ENCODE measurements at regions of chr6 and their contacts with region 1.

Region 1: GRCh38 chr6:117976030-117976651 is 69.1 kb downstream of the SLC35F1 start:
- DNase-seq: no peak
- H3K4me3 ChIP-seq: no peak overlapping the region
- H3K27ac ChIP-seq: no peak overlapping the region
- H3K4me1 ChIP-seq: no peaks in the 10 kb centered on the region
- H3K27me3 ChIP-seq: no peaks in the 10 kb centered on the region
- CTCF ChIP-seq: peak in 2 of 3 donors; percentile 38 to 45
- POLR2A ChIP-seq: no peak

Region 2: DNA sequence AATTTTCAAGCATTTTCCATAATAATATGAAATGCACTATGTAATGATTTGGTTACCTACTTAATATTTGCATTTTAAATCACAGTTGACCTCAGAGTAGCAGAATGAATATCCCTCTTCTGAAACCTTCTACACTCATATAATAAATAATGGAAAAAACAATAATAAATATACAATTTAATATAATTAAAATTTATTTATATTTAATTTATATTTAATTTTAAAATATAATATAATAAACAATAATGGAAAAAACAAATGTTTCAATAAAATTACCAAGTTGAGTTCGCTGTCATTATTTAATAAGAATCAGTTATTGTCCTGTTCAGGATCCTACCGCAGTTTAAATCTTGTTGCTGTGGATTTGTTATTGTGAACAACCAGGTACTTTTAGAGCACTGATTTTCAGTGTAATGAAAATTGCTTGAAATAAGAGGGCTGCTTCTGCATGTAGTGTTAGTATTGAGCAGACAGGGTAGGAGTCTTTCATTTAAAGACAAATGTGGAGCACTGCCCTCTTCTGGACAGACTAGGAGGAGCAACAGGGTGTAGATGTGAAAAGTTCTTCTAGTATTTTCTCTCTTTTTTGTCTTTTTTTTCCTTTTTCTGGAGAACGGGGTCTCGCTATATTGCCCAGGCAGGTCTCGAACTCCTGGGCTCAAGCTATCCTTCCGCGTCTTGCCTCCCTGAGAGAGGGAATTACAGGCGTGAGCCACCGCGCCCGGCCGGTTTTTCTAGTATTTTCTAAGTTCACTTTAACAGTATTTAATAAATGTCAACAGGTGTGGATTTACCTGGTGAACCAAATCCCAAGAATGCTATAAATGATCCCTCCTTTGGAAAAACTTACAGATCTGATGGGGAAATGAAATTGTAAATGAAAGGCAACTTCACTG is 1444.2 kb before region 1 on chr6:
- intact Hi-C with region 1: loop called (anchors 10 kb)
- DNase-seq: no peak
- H3K4me3 ChIP-seq: no peak overlapping the region
- H3K27ac ChIP-seq: no peak overlapping the region
- H3K4me1 ChIP-seq: no peaks in the 10 kb centered on the region
- H3K27me3 ChIP-seq: no peaks in the 10 kb centered on the region
- CTCF ChIP-seq: peak; percentile 47 to 67 (median 67)
- POLR2A ChIP-seq: no peak

Region 3: DNA sequence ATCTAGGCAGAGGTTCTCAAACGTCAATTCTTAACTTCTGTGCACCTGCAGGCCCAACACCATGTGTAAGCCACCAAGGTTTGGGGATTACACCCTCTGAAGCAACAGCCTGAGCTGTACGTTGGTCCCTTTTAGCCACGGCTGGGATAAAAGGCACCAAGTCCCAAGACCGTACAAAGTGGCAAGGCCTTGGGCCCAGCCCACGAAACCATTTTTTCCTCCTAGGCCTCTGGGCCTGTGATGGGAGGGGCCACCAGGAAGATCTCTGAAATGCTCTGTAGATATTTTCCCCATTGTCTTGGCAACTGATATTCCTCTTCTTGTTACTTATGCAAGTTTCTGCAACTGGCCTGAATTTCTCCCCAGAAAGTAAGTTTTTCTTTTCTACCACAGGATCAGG is 1106.9 kb after region 1 on chr6:
- intact Hi-C with region 1: loop called (anchors 5 kb)
- DNase-seq: no peak
- H3K4me3 ChIP-seq: no peak overlapping the region
- H3K27ac ChIP-seq: no peak overlapping the region
- H3K4me1 ChIP-seq: no peaks in the 10 kb centered on the region
- H3K27me3 ChIP-seq: no peaks in the 10 kb centered on the region
- CTCF ChIP-seq: no peak
- POLR2A ChIP-seq: no peak

Measured in breast epithelium (tissue), 4 donors.